ENCODE measurements at regions of chr19 and their contacts with region 1.

Region 1: GRCh38 chr19:40598121-40598917 is 2.9 kb upstream of the LTBP4 start:
- DNase-seq: peak; percentile 94
- H3K4me3 Mint-ChIP-seq: peak overlapping the region; percentile 54
- H3K27ac Mint-ChIP-seq: no peak overlapping the region
- H3K4me1 Mint-ChIP-seq: peaks cover 44% of the 10 kb centered on the region
- H3K27me3 Mint-ChIP-seq: no peaks in the 10 kb centered on the region
- CTCF ChIP-seq: peak; percentile 96

Region 2: DNA sequence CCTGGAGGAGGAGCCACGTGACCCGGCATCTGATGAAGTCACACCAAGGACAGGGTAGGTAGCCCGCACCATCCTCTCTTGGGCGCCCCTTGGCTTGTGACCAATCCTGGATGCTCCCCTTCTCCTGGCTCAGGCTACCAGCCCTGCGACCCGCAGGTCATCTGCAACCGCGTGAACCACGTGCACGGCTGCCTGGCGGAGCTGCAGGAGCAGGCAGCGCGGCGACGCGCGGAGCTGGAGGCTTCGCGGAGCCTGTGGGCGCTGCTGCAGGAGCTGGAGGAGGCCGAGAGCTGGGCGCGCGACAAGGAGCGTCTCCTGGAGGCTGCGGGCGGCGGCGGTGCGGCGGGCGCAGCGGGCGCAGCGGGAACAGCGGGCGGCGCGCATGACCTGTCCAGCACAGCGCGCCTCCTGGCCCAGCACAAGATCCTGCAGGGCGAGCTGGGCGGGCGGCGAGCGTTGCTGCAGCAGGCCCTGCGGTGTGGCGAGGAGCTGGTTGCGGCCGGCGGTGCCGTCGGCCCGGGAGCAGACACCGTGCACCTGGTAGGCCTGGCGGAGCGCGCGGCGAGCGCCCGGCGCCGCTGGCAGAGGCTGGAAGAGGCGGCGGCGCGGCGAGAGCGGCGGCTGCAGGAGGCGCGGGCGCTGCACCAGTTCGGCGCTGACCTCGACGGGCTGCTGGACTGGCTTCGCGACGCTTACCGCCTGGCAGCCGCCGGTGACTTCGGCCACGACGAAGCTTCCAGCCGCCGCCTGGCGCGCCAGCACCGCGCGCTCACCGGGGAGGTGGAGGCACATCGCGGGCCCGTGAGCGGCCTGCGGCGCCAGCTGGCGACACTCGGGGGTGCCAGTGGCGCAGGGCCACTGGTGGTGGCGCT is 85.6 kb before region 1 on chr19:
- CTCF ChIA-PET with region 1: no interaction called
- POLR2A ChIA-PET with region 1: no interaction called
- intact Hi-C with region 1: no loop called
- DNase-seq: no peak
- H3K4me3 Mint-ChIP-seq: no peak overlapping the region
- H3K27ac Mint-ChIP-seq: no peak overlapping the region
- H3K4me1 Mint-ChIP-seq: no peaks in the 10 kb centered on the region
- H3K27me3 Mint-ChIP-seq: peaks cover 24% of the 10 kb centered on the region
- CTCF ChIP-seq: no peak

Region 3: GRCh38 chr19:40529093-40529954 is 69.0 kb before region 1 on chr19:
- CTCF ChIA-PET with region 1: interaction called, 7 read pairs
- POLR2A ChIA-PET with region 1: interaction called, 3 read pairs
- intact Hi-C with region 1: loop called (anchors 1 kb)
- DNase-seq: peak; percentile 79
- H3K4me3 Mint-ChIP-seq: peak overlapping the region; percentile 64
- H3K27ac Mint-ChIP-seq: no peak overlapping the region
- H3K4me1 Mint-ChIP-seq: peaks cover 14% of the 10 kb centered on the region
- H3K27me3 Mint-ChIP-seq: no peaks in the 10 kb centered on the region
- CTCF ChIP-seq: peak; percentile 95

Region 4: DNA sequence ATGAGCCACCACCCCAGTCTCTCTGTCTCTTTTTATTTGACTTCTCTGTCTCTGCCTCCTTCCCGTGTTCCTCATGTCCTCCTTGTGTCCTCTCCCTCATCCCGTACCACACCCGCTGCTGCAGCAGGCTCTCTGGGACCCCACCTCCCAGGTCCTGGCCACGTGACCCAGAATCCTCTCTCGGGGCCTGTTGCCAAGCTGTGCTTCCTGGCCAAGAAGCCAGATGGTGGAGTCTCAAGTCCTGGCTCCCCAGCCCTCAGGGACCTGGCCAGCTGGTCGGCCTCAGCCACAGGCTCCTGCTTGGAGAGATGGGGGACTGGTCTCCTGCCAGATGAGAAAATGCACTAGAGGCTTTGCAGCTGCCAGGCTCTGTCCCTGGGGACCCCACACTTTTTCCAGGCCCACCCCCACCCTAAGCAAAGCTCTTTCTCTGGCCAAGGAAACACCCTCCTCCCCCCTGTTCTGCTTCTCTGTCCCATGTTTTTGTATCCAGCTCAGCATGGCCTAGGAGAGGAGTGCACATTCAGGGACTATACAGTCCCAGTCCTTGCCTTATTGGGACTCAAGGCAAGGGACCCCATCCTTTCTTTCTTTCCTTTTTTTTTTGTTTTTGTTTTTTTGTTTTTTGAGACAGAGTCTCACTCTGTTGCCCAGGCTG is 56.0 kb before region 1 on chr19:
- CTCF ChIA-PET with region 1: interaction called, 8 read pairs
- POLR2A ChIA-PET with region 1: interaction called, 3 read pairs
- intact Hi-C with region 1: loop called (anchors 1 kb)
- DNase-seq: no peak
- H3K4me3 Mint-ChIP-seq: no peak overlapping the region
- H3K27ac Mint-ChIP-seq: no peak overlapping the region
- H3K4me1 Mint-ChIP-seq: peaks cover 12% of the 10 kb centered on the region
- H3K27me3 Mint-ChIP-seq: no peaks in the 10 kb centered on the region
- CTCF ChIP-seq: no peak

Region 5: GRCh38 chr19:40549007-40549708 is 49.2 kb before region 1 on chr19:
- CTCF ChIA-PET with region 1: interaction called, 10 read pairs
- POLR2A ChIA-PET with region 1: no interaction called
- intact Hi-C with region 1: loop called (anchors 1 kb)
- DNase-seq: peak; percentile 67
- H3K4me3 Mint-ChIP-seq: peak overlapping the region; percentile 26
- H3K27ac Mint-ChIP-seq: no peak overlapping the region
- H3K4me1 Mint-ChIP-seq: peaks cover 6% of the 10 kb centered on the region
- H3K27me3 Mint-ChIP-seq: peaks cover 25% of the 10 kb centered on the region
- CTCF ChIP-seq: peak; percentile 42

Region 6: GRCh38 chr19:40570313-40571004 is 27.9 kb before region 1 on chr19:
- CTCF ChIA-PET with region 1: interaction called, 8 read pairs
- POLR2A ChIA-PET with region 1: interaction called, 39 read pairs
- intact Hi-C with region 1: loop called (anchors 1 kb)
- DNase-seq: peak; percentile 100
- H3K4me3 Mint-ChIP-seq: peak overlapping the region; percentile 66
- H3K27ac Mint-ChIP-seq: peak overlapping the region; percentile 39
- H3K4me1 Mint-ChIP-seq: peaks cover 13% of the 10 kb centered on the region
- H3K27me3 Mint-ChIP-seq: no peaks in the 10 kb centered on the region
- CTCF ChIP-seq: peak; percentile 33

Region 7: DNA sequence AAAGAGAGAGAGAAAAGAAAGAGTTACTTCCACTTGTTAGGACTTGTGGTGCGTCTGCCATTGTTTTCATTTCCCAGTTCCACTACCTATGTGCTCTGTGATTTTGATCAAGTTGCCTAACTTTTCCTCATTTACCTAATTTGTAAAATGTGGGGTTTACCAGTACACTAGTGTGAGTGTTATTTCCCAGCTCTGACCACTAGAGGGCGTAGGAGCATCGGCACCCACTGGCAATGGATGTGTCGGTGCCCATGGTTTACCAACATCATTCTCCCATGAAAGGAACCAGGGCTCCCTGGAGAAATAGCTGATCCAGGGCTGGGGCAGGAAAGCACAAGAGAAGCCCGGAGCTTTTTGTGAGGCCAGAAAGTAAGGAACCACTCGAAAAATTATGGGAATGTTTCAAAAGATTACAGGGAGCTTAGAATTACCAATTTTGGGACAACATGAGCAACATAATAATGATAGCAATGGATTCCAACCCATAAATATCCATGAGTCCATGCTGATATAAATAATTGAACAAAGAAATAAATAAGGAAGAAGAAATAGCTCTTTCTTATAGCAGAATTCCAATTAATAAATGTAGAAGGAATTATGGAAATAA is 1043.7 kb after region 1 on chr19:
- CTCF ChIA-PET with region 1: no interaction called
- POLR2A ChIA-PET with region 1: no interaction called
- intact Hi-C with region 1: no loop called
- DNase-seq: peak; percentile 73
- H3K4me3 Mint-ChIP-seq: no peak overlapping the region
- H3K27ac Mint-ChIP-seq: no peak overlapping the region
- H3K4me1 Mint-ChIP-seq: no peaks in the 10 kb centered on the region
- H3K27me3 Mint-ChIP-seq: peaks cover 16% of the 10 kb centered on the region
- CTCF ChIP-seq: peak; percentile 85